HepG2 (cell line): ENCODE measurements at regions of chr1 and their contacts with region 1.

Region 1: GRCh38 chr1:46477153-46477929 is 12.3 kb upstream of the DMBX1 start:
- DNase-seq: peak; percentile 44
- ATAC-seq: peak; percentile 76
- H3K4me3 ChIP-seq: no peak overlapping the region
- H3K27ac ChIP-seq: no peak overlapping the region
- H3K4me1 ChIP-seq: peaks cover 27% of the 10 kb centered on the region; the same call in 1 of the 2 replicates
- H3K27me3 ChIP-seq: peaks cover 3 to 32% of the 10 kb centered on the region in 2 experiments; a peak in 4 of 5 replicates
- CTCF ChIP-seq: peak; percentile 85
- EP300 ChIP-seq: no peak
- POLR2A ChIP-seq: no peak
- RAD21 ChIP-seq: peak; percentile 73

Region 2: DNA sequence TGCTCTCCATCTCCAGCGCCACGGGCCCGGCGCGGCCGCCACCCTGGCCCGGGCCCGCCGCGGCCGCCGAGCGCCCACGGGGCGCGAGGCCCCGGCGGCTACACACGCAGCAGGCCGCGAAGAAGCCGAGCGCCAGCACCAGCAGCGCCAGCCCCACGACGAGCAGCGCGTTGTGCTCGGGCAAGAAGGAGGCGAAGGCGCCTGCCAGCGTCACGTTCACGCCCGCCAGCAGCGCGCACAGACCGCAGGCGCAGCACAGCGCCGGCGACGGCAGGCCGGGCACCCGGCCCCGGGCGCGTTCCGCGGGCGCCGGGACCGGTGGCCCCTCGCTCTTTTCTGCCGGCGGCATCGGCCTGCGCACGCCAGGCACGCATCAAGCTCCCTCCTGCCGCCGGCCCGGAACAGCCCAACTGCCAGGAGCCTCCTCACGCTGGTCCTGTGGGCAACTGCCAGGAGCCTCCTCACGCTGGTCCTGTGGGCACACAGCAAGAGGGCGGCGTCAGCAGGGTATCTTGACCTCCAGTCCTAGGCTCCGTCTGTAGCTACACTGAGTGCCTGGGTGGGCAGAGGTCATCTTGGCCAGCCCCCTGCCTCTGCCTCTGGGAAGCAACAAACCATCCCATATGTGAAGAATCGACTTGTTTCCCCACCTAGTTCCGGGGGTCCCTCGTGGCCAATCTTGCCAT is 56.0 kb after region 1 on chr1:
- CTCF ChIA-PET with region 1: interaction called, 51 read pairs
- POLR2A ChIA-PET with region 1: no interaction called
- in situ Hi-C with region 1: loop called (anchors 5 kb)
- intact Hi-C with region 1: loop called (anchors 1 kb)
- DNase-seq: no peak
- ATAC-seq: no peak; the same call in 2 of the 3 replicates
- H3K4me3 ChIP-seq: peak overlapping the region in 1 of 3 experiments; percentile 43; a peak in 2 of 6 replicates
- H3K27ac ChIP-seq: no peak overlapping the region
- H3K4me1 ChIP-seq: no peaks in the 10 kb centered on the region
- H3K27me3 ChIP-seq: peaks cover 8 to 54% of the 10 kb centered on the region in 2 experiments
- CTCF ChIP-seq: no peak
- EP300 ChIP-seq: no peak
- POLR2A ChIP-seq: no peak
- RAD21 ChIP-seq: no peak